IMR-90 (cell line): ENCODE measurements at regions of chr5 and their contacts with region 1.

Region 1: GRCh38 chr5:32709781-32710549 is 1.2 kb upstream of the NPR3 start:
- DNase-seq: peak; percentile 79
- ATAC-seq: peak; percentile 62
- H3K4me3 ChIP-seq: peak overlapping the region; percentile 84
- H3K27ac ChIP-seq: peak overlapping the region; percentile 80
- H3K4me1 ChIP-seq: no peaks in the 10 kb centered on the region; the same call in none of the 2 replicates
- H3K27me3 ChIP-seq: no peaks in the 10 kb centered on the region
- CTCF ChIP-seq: peak; percentile 75
- POLR2A ChIP-seq: peak; percentile 65; the same call in 1 of the 2 replicates
- RAD21 ChIP-seq: peak; percentile 50

Region 2: GRCh38 chr5:32687167-32687831 is 22.7 kb before region 1 on chr5:
- CTCF ChIA-PET with region 1: no interaction called
- POLR2A ChIA-PET with region 1: no interaction called
- dilution Hi-C with region 1: no loop called
- in situ Hi-C with region 1: no loop called
- intact Hi-C with region 1: no loop called
- DNase-seq: peak; percentile 19
- ATAC-seq: no peak
- H3K4me3 ChIP-seq: no peak overlapping the region
- H3K27ac ChIP-seq: no peak overlapping the region
- H3K4me1 ChIP-seq: peaks cover 5% of the 10 kb centered on the region
- H3K27me3 ChIP-seq: no peaks in the 10 kb centered on the region
- CTCF ChIP-seq: no peak
- POLR2A ChIP-seq: no peak
- RAD21 ChIP-seq: no peak

Region 3: GRCh38 chr5:32760091-32760509 is 50.1 kb after region 1 on chr5:
- CTCF ChIA-PET with region 1: no interaction called
- POLR2A ChIA-PET with region 1: no interaction called
- dilution Hi-C with region 1: no loop called
- in situ Hi-C with region 1: no loop called
- intact Hi-C with region 1: loop called (anchors 2 kb)
- DNase-seq: peak; percentile 98
- ATAC-seq: peak; percentile 96
- H3K4me3 ChIP-seq: peak overlapping the region; percentile 2; the same call in 1 of the 2 replicates
- H3K27ac ChIP-seq: peak overlapping the region; percentile 46; the same call in 1 of the 2 replicates
- H3K4me1 ChIP-seq: peaks cover 2% of the 10 kb centered on the region; the same call in 1 of the 2 replicates
- H3K27me3 ChIP-seq: no peaks in the 10 kb centered on the region
- CTCF ChIP-seq: no peak
- POLR2A ChIP-seq: no peak
- RAD21 ChIP-seq: peak; percentile 13

Region 4: GRCh38 chr5:32852535-32852934 is 142.6 kb after region 1 on chr5:
- CTCF ChIA-PET with region 1: interaction called, 13 read pairs
- POLR2A ChIA-PET with region 1: no interaction called
- dilution Hi-C with region 1: no loop called
- in situ Hi-C with region 1: no loop called
- intact Hi-C with region 1: loop called (anchors 2 kb)
- DNase-seq: peak; percentile 89
- ATAC-seq: peak; percentile 97
- H3K4me3 ChIP-seq: no peak overlapping the region
- H3K27ac ChIP-seq: no peak overlapping the region
- H3K4me1 ChIP-seq: peaks cover 8% of the 10 kb centered on the region; the same call in 1 of the 2 replicates
- H3K27me3 ChIP-seq: no peaks in the 10 kb centered on the region
- CTCF ChIP-seq: peak; percentile 55
- POLR2A ChIP-seq: no peak
- RAD21 ChIP-seq: peak; percentile 60

Region 5: GRCh38 chr5:33074548-33074947 is 364.6 kb after region 1 on chr5:
- CTCF ChIA-PET with region 1: no interaction called
- POLR2A ChIA-PET with region 1: no interaction called
- dilution Hi-C with region 1: no loop called
- in situ Hi-C with region 1: no loop called
- intact Hi-C with region 1: loop called (anchors 5 kb)
- DNase-seq: peak; percentile 32
- ATAC-seq: peak; percentile 47
- H3K4me3 ChIP-seq: no peak overlapping the region
- H3K27ac ChIP-seq: peak overlapping the region; percentile 94; the same call in 1 of the 2 replicates
- H3K4me1 ChIP-seq: peaks cover 17% of the 10 kb centered on the region
- H3K27me3 ChIP-seq: no peaks in the 10 kb centered on the region
- CTCF ChIP-seq: no peak
- POLR2A ChIP-seq: no peak
- RAD21 ChIP-seq: no peak

Region 6: GRCh38 chr5:33180900-33181299 is 470.9 kb after region 1 on chr5:
- CTCF ChIA-PET with region 1: interaction called, 3 read pairs
- POLR2A ChIA-PET with region 1: no interaction called
- dilution Hi-C with region 1: no loop called
- in situ Hi-C with region 1: loop called (anchors 10 kb)
- intact Hi-C with region 1: loop called (anchors 1 kb)
- DNase-seq: peak; percentile 70
- ATAC-seq: peak; percentile 78
- H3K4me3 ChIP-seq: no peak overlapping the region
- H3K27ac ChIP-seq: no peak overlapping the region
- H3K4me1 ChIP-seq: no peaks in the 10 kb centered on the region
- H3K27me3 ChIP-seq: no peaks in the 10 kb centered on the region
- CTCF ChIP-seq: peak; percentile 80
- POLR2A ChIP-seq: no peak
- RAD21 ChIP-seq: peak; percentile 83

Region 7: DNA sequence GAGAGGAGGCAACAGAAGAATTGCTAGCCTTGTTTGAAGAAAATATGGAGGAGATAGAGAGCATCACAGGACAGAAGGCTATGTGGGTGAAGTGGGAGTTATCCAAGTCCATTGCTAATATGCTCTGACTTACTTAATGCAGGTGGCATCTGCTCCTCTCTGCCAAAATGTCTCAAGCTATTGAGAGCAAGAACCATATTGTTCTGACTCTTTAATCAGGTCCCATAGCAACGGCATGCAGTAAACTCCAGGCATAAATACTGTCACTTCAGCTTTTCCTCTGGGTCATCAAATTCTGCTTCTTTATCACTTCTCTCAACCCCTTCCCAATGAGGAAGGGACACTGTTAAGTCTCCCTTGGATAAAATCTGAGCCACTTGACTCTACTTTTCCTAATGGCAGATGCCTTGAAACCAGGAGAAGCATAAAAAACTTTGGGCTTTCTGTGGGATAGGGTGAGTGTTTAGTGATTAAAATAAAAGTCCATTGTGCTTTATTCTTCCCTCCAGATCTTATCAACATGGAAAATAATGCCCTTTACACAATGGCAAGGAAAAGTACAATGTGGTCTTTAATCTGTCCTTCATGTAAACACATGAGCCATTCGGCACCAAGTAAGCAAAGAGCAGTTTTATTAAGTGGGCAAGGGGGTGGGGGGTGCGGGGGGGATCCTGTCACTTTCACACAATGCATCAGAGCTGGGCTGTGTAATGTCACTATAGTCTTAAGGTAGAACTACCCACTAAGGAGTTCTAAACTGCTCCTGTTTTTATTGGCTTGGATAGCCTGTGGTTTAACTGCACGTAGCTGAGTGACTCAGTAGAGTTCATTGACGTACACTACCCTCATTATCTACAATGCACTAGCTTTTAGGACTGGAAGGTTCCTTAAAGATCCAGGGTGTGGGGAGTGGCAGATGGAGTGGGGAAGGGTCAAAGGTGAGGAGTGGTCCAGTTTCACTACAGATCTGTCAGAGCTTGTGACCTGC is 659.8 kb after region 1 on chr5:
- CTCF ChIA-PET with region 1: no interaction called
- POLR2A ChIA-PET with region 1: no interaction called
- dilution Hi-C with region 1: no loop called
- in situ Hi-C with region 1: no loop called
- intact Hi-C with region 1: loop called (anchors 5 kb)
- DNase-seq: peak; percentile 99
- ATAC-seq: peak; percentile 89
- H3K4me3 ChIP-seq: no peak overlapping the region
- H3K27ac ChIP-seq: peak overlapping the region; percentile 52
- H3K4me1 ChIP-seq: peaks cover 14% of the 10 kb centered on the region
- H3K27me3 ChIP-seq: no peaks in the 10 kb centered on the region
- CTCF ChIP-seq: no peak
- POLR2A ChIP-seq: no peak
- RAD21 ChIP-seq: no peak